ENCODE measurements at regions of chr20 and their contacts with region 1.

Region 1: GRCh38 chr20:23147964-23148730 is 62.0 kb upstream of the CD93 start:
- DNase-seq: peak; percentile 80
- ATAC-seq: peak; percentile 85
- H3K4me3 ChIP-seq: peak overlapping the region; percentile 22 to 52
- H3K27ac ChIP-seq: peak overlapping the region; percentile 33
- H3K4me1 ChIP-seq: peaks cover 22 to 82% of the 10 kb centered on the region in 2 experiments
- H3K27me3 ChIP-seq: no peaks in the 10 kb centered on the region
- CTCF ChIP-seq: no peak
- POLR2A ChIP-seq: no peak
- RAD21 ChIP-seq: peak; percentile 12; the same call in 1 of the 2 replicates

Region 2: DNA sequence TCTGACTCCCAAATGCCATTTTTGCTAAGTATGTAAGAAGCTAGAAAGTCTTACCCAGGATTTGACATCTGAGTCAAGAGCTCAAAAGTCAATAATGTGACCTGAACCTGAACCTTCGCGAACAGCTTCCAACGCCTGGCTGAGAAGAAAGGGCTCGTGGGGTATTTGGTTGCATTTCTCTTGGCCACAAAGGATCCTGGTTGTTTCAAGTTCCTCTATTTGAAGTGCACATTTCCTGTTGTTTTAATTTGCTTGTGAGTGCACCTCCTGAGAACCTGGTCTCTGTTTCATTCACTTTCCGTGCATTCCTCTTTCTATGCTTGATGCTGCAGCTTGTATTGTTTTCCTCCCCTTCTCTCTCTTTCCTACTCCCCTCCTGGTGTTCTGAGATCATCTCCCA is 776.3 kb before region 1 on chr20:
- CTCF ChIA-PET with region 1: no interaction called
- POLR2A ChIA-PET with region 1: no interaction called
- RAD21 ChIA-PET with region 1: no interaction called
- intact Hi-C with region 1: loop called (anchors 10 kb)
- DNase-seq: no peak
- ATAC-seq: peak; percentile 45
- H3K4me3 ChIP-seq: no peak overlapping the region
- H3K27ac ChIP-seq: peak overlapping the region; percentile 54
- H3K4me1 ChIP-seq: peaks cover 35 to 56% of the 10 kb centered on the region in 2 experiments
- H3K27me3 ChIP-seq: no peaks in the 10 kb centered on the region
- CTCF ChIP-seq: no peak
- POLR2A ChIP-seq: no peak
- RAD21 ChIP-seq: no peak

Region 3: GRCh38 chr20:23167431-23167830 is 19.3 kb after region 1 on chr20:
- CTCF ChIA-PET with region 1: no interaction called
- POLR2A ChIA-PET with region 1: no interaction called
- RAD21 ChIA-PET with region 1: no interaction called
- intact Hi-C with region 1: no loop called
- DNase-seq: no peak
- ATAC-seq: no peak
- H3K4me3 ChIP-seq: no peak overlapping the region
- H3K27ac ChIP-seq: no peak overlapping the region
- H3K4me1 ChIP-seq: peaks cover 0 to 6% of the 10 kb centered on the region in 2 experiments; a peak in 1 of 4 replicates
- H3K27me3 ChIP-seq: peaks cover 3% of the 10 kb centered on the region; the same call in 1 of the 2 replicates
- CTCF ChIP-seq: no peak
- POLR2A ChIP-seq: no peak
- RAD21 ChIP-seq: no peak

Region 4: DNA sequence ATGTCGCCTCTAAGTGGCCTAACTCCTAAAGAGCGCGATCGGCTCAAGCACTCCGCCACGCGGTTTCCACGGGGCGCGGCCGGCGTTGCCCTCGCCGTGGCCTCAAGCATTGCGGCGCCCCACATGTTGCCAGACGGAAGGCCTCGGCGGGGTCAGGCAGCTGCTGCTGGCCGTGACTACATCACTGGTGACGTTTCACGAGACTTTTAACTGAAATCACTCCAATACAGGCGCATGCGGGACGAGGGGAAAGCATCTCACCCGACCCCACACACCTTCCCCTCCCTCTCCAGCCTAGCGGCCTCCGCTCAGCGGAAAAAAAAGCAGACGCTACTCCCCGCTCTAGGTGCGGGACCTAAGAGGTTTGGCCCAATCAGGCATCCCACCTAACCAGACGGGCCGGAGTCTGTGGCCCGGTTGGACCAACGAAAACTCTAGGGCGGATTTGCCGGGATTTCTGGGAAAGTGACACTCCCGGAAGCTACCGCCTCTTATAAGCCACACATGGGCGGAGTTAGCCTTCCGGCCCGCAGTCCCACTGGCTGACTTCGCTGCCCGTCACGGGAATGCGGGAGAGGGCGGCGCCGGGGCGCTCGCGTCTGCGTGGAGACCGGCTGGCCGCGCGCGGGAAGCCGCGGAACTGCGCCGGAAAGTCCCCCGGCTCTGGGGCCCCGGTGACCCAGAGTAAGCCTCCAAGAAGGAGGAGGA is 202.2 kb after region 1 on chr20 and contains the start of gene NXT1:
- CTCF ChIA-PET with region 1: no interaction called
- POLR2A ChIA-PET with region 1: no interaction called
- RAD21 ChIA-PET with region 1: no interaction called
- intact Hi-C with region 1: loop called (anchors 10 kb)
- DNase-seq: peak; percentile 98
- ATAC-seq: peak; percentile 88
- H3K4me3 ChIP-seq: peak within 1 kb of the TSS; percentile 92 to 99
- H3K27ac ChIP-seq: peak within 1 kb of the TSS; percentile 99
- H3K4me1 ChIP-seq: peaks cover 15 to 24% of the 10 kb centered on the region in 2 experiments
- H3K27me3 ChIP-seq: no peaks in the 10 kb centered on the region
- CTCF ChIP-seq: no peak
- POLR2A ChIP-seq: peak; percentile 46
- RAD21 ChIP-seq: no peak
- total RNA-seq, gene NXT1: 29.9 TPM

Region 5: GRCh38 chr20:23637282-23638221 is 489.4 kb after region 1 on chr20 and contains the start of gene CST3:
- CTCF ChIA-PET with region 1: no interaction called
- POLR2A ChIA-PET with region 1: no interaction called
- RAD21 ChIA-PET with region 1: no interaction called
- intact Hi-C with region 1: no loop called
- DNase-seq: peak; percentile 68
- ATAC-seq: peak; percentile 87
- H3K4me3 ChIP-seq: peak within 1 kb of the TSS; percentile 77 to 91
- H3K27ac ChIP-seq: peak within 1 kb of the TSS; percentile 86
- H3K4me1 ChIP-seq: peaks cover 29 to 41% of the 10 kb centered on the region in 2 experiments
- H3K27me3 ChIP-seq: no peaks in the 10 kb centered on the region
- CTCF ChIP-seq: no peak
- POLR2A ChIP-seq: peak; percentile 84
- RAD21 ChIP-seq: no peak
- total RNA-seq, gene CST3: 181 TPM